ENCODE measurements at regions of chr14 and their contacts with region 1.

Region 1: DNA sequence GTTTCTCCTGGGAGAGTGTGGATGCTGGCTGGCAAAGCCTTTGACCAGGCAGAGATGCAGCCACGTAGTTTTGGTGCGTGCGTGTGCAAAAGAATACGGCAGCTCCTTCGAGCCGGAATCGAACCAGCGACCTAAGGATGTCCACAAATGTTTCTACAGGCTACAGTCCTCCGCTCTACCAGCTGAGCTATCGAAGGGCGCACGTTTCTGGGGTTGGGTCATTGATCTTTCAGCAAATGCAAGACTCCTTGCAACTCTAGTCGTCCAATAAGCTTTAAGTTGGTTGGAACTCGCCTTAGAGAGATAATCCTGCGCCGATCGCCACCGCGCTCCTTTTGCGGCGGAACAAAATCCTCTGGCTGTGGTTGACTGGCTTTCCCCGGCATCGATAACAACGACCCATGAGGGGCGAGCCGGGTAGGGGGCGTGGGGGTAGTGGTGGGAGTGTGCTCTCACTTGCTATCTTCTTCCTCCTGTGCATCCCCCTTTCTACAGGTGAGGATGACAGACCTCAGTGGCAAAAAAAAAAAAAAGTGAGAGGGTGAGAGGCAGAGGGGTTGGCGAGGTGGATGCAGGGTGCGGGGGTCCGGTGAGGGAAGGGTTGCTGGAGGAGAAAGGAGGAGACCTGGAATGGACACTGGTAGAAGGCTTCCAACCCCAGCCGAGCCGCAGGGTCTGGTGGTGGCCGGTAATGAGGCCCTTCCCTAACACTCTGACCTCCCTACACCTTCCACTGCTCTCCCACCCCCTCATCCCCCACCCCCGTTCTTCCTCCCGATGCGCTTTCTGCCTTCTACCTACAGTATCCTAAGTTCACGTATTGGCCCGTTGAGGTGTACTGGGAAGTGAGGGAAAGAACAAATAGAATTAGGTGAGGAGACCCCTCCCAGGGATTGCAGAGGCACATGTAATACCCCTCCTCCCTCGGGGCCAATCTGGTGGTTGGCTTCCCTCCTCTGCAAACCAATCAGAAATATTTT is 11.8 kb upstream of the OR6S1 start:
- DNase-seq: peak; percentile 86
- ATAC-seq: peak; percentile 86
- H3K4me3 Mint-ChIP-seq: peak overlapping the region; percentile 65
- H3K27ac Mint-ChIP-seq: no peak overlapping the region
- H3K4me1 Mint-ChIP-seq: peaks cover 19% of the 10 kb centered on the region
- H3K27me3 Mint-ChIP-seq: peaks cover 58% of the 10 kb centered on the region
- CTCF ChIP-seq: no peak

Region 2: DNA sequence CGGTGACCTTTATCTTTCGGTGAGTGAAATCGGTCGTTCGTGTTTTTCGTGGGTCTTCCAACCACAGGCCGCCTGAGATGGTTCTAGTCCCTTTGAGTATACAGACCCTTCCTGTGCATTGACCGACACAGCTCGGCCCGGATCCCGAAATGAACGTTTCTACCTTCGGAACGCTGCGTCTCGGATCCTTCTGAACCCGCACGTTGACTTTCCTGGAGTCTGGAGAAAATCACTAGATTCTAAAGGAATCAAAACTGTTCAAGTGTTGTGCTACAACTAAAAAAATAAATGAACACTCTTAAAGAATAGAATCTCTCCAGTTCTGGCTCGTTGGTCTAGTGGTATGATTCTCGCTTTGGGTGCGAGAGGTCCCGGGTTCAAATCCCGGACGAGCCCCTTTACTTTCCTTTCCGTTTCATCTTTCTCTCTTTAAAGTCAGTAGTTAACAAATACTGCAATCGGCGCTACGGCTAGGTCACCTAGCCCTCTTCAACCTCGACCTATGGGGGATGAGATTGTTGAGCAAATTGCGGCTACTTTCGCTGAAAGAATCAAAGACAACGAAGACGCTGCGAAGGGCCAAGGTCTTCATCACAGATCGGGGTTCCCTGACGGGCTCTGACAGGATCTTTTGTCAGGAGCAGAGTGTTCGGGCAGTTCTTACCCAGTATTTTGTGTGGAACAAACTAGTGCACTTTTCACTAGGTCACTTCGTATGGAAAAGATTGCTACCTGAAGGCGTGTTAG is 20.4 kb before region 1 on chr14:
- CTCF ChIA-PET with region 1: no interaction called
- POLR2A ChIA-PET with region 1: no interaction called
- intact Hi-C with region 1: loop called (anchors 2 kb)
- DNase-seq: peak; percentile 92
- ATAC-seq: peak; percentile 87
- H3K4me3 Mint-ChIP-seq: peak overlapping the region; percentile 80
- H3K27ac Mint-ChIP-seq: peak overlapping the region; percentile 76
- H3K4me1 Mint-ChIP-seq: peaks cover 35% of the 10 kb centered on the region
- H3K27me3 Mint-ChIP-seq: peaks cover 31% of the 10 kb centered on the region
- CTCF ChIP-seq: no peak

Measured in activated CD8-positive, alpha-beta T cell treated with anti-CD3 and anti-CD28 coated beads for 36 hours (primary cell).